ENCODE measurements at regions of chr20 and their contacts with region 1.

Region 1: GRCh38 chr20:34312544-34313217 is 9.5 kb upstream of the AHCY start:
- DNase-seq: peak; percentile 95
- H3K4me3 Mint-ChIP-seq: no peak overlapping the region
- H3K27ac Mint-ChIP-seq: no peak overlapping the region
- H3K4me1 Mint-ChIP-seq: peaks cover 11% of the 10 kb centered on the region
- H3K27me3 Mint-ChIP-seq: peaks cover 14% of the 10 kb centered on the region

Region 2: GRCh38 chr20:34268851-34269636 is 43.6 kb before region 1 on chr20:
- CTCF ChIA-PET with region 1: no interaction called
- intact Hi-C with region 1: no loop called
- DNase-seq: peak; percentile 20
- H3K4me3 Mint-ChIP-seq: peak overlapping the region; percentile 27
- H3K27ac Mint-ChIP-seq: no peak overlapping the region
- H3K4me1 Mint-ChIP-seq: peaks cover 5% of the 10 kb centered on the region
- H3K27me3 Mint-ChIP-seq: peaks cover 5% of the 10 kb centered on the region

Region 3: GRCh38 chr20:34363062-34363464 is 50.4 kb after region 1 on chr20 and contains the start of gene ITCH:
- CTCF ChIA-PET with region 1: interaction called, 10 read pairs
- intact Hi-C with region 1: no loop called
- DNase-seq: peak; percentile 96
- H3K4me3 Mint-ChIP-seq: peak within 1 kb of the TSS; percentile 97
- H3K27ac Mint-ChIP-seq: peak within 1 kb of the TSS; percentile 95
- H3K4me1 Mint-ChIP-seq: peaks cover 34% of the 10 kb centered on the region
- H3K27me3 Mint-ChIP-seq: no peaks in the 10 kb centered on the region
- total RNA-seq, gene ITCH: 35.3 to 40.0 TPM

Region 4: GRCh38 chr20:34426026-34426425 is 113.3 kb after region 1 on chr20:
- CTCF ChIA-PET with region 1: interaction called, 19 read pairs
- intact Hi-C with region 1: no loop called
- DNase-seq: no peak
- H3K4me3 Mint-ChIP-seq: no peak overlapping the region
- H3K27ac Mint-ChIP-seq: no peak overlapping the region
- H3K4me1 Mint-ChIP-seq: peaks cover 8% of the 10 kb centered on the region
- H3K27me3 Mint-ChIP-seq: no peaks in the 10 kb centered on the region

Region 5: GRCh38 chr20:34465286-34465685 is 152.6 kb after region 1 on chr20:
- CTCF ChIA-PET with region 1: interaction called, 12 read pairs
- intact Hi-C with region 1: no loop called
- DNase-seq: no peak
- H3K4me3 Mint-ChIP-seq: no peak overlapping the region
- H3K27ac Mint-ChIP-seq: no peak overlapping the region
- H3K4me1 Mint-ChIP-seq: no peaks in the 10 kb centered on the region
- H3K27me3 Mint-ChIP-seq: no peaks in the 10 kb centered on the region

Region 6: GRCh38 chr20:34516247-34517113 is 203.8 kb after region 1 on chr20 and contains the start of gene DYNLRB1:
- CTCF ChIA-PET with region 1: interaction called, 82 read pairs
- intact Hi-C with region 1: loop called (anchors 1 kb)
- DNase-seq: peak; percentile 96
- H3K4me3 Mint-ChIP-seq: peak within 1 kb of the TSS; percentile 98
- H3K27ac Mint-ChIP-seq: peak within 1 kb of the TSS; percentile 96
- H3K4me1 Mint-ChIP-seq: peaks cover 29% of the 10 kb centered on the region
- H3K27me3 Mint-ChIP-seq: no peaks in the 10 kb centered on the region
- total RNA-seq, gene DYNLRB1: 81.9 to 92.9 TPM

Region 7: DNA sequence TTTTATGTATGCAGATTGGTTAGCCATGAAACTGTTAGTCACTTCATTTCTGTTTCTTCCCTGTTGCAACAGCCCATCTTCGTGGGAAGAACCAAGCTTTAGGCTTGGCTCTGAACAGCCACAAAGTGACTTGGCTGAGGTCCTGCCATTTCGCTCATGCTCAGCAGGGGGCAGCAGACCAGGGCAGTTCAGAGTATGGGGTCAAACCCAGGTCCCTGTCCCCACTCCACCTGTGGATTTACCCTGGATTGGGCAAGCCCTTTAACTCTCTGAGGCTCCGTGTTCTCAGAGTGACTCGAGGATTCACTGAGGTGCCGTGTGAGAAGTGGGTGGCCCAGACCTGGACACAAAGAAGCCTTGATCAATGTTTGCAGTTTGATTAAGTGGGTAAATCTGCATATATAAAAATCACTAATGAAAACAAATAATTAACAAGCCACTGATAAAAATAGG is 226.0 kb after region 1 on chr20:
- CTCF ChIA-PET with region 1: interaction called, 7 read pairs
- intact Hi-C with region 1: loop called (anchors 5 kb)
- DNase-seq: peak; percentile 71
- H3K4me3 Mint-ChIP-seq: no peak overlapping the region
- H3K27ac Mint-ChIP-seq: no peak overlapping the region
- H3K4me1 Mint-ChIP-seq: peaks cover 12% of the 10 kb centered on the region
- H3K27me3 Mint-ChIP-seq: no peaks in the 10 kb centered on the region